ENCODE measurements at regions of chr3 and their contacts with region 1.

Region 1: DNA sequence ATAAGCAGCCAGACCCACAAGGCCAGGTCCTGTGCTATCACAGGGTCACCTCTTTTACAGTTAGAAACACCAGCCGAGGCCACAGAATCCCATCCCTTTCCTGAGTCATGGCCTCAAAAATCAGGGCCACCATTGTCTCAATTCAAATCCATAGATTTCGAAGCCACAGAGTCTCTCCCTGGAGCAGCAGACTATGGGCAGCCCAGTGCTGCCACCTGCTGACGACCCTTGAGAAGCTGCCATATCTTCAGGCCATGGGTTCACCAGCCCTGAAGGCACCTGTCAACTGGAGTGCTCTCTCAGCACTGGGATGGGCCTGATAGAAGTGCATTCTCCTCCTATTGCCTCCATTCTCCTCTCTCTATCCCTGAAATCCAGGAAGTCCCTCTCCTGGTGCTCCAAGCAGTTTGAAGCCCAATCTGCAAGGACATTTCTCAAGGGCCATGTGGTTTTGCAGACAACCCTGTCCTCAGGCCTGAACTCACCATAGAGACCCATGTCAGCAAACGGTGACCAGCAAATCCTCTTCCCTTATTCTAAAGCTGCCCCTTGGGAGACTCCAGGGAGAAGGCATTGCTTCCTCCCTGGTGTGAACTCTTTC is 39.6 kb downstream of the TGM4 start:
- DNase-seq: peak; percentile 70
- ATAC-seq: peak; percentile 58
- H3K4me3 ChIP-seq: no peak overlapping the region
- H3K4me3 Mint-ChIP-seq: no peak overlapping the region
- H3K27ac ChIP-seq: no peak overlapping the region
- H3K27ac Mint-ChIP-seq: no peak overlapping the region
- H3K4me1 ChIP-seq: no peaks in the 10 kb centered on the region
- H3K4me1 Mint-ChIP-seq: no peaks in the 10 kb centered on the region
- H3K27me3 ChIP-seq: peaks cover 0 to 16% (median 5%) of the 10 kb centered on the region in 4 experiments
- H3K27me3 Mint-ChIP-seq: peaks cover 18% of the 10 kb centered on the region
- CTCF ChIP-seq: peak; percentile 80

Region 2: GRCh38 chr3:44323341-44323955 is 590.5 kb before region 1 on chr3:
- CTCF ChIA-PET with region 1: interaction called, 27 read pairs
- POLR2A ChIA-PET with region 1: no interaction called
- intact Hi-C with region 1: no loop called
- DNase-seq: peak; percentile 57
- ATAC-seq: no peak
- H3K4me3 ChIP-seq: no peak overlapping the region
- H3K4me3 Mint-ChIP-seq: no peak overlapping the region
- H3K27ac ChIP-seq: no peak overlapping the region
- H3K27ac Mint-ChIP-seq: no peak overlapping the region
- H3K4me1 ChIP-seq: no peaks in the 10 kb centered on the region
- H3K4me1 Mint-ChIP-seq: no peaks in the 10 kb centered on the region
- H3K27me3 ChIP-seq: peaks cover 0 to 3% (median 0%) of the 10 kb centered on the region in 4 experiments
- H3K27me3 Mint-ChIP-seq: peaks cover 10% of the 10 kb centered on the region
- CTCF ChIP-seq: peak; percentile 80

Region 3: DNA sequence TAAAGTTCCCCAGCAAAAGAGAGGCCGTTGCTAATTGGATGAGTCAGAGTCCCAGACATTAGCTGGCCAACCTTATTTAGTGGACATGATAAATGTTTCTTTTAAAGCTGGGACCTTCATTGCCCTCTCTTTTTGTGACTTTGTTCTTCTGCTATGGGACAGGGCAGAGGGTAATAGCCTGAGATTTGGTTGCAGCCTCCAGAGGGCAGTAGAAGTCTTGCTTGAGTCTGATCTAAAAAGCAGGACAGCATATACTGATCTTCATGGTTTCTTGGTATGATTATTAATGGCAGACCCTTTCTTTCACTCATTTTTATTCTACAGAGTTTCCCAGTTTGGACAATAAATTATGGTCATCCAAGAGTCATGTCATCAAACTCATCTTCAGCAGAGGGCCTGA is 384.0 kb before region 1 on chr3:
- CTCF ChIA-PET with region 1: interaction called, 70 read pairs
- POLR2A ChIA-PET with region 1: no interaction called
- intact Hi-C with region 1: no loop called
- DNase-seq: no peak
- ATAC-seq: no peak
- H3K4me3 ChIP-seq: no peak overlapping the region
- H3K4me3 Mint-ChIP-seq: no peak overlapping the region
- H3K27ac ChIP-seq: no peak overlapping the region
- H3K27ac Mint-ChIP-seq: no peak overlapping the region
- H3K4me1 ChIP-seq: no peaks in the 10 kb centered on the region
- H3K4me1 Mint-ChIP-seq: no peaks in the 10 kb centered on the region
- H3K27me3 ChIP-seq: peaks cover 0 to 16% (median 2%) of the 10 kb centered on the region in 4 experiments
- H3K27me3 Mint-ChIP-seq: peaks cover 28% of the 10 kb centered on the region
- CTCF ChIP-seq: no peak

Region 4: GRCh38 chr3:44535364-44535763 is 378.6 kb before region 1 on chr3:
- CTCF ChIA-PET with region 1: interaction called, 70 read pairs
- POLR2A ChIA-PET with region 1: no interaction called
- intact Hi-C with region 1: no loop called
- DNase-seq: no peak
- ATAC-seq: no peak
- H3K4me3 ChIP-seq: no peak overlapping the region
- H3K4me3 Mint-ChIP-seq: no peak overlapping the region
- H3K27ac ChIP-seq: no peak overlapping the region
- H3K27ac Mint-ChIP-seq: no peak overlapping the region
- H3K4me1 ChIP-seq: no peaks in the 10 kb centered on the region
- H3K4me1 Mint-ChIP-seq: no peaks in the 10 kb centered on the region
- H3K27me3 ChIP-seq: peaks cover 0 to 27% (median 9%) of the 10 kb centered on the region in 4 experiments
- H3K27me3 Mint-ChIP-seq: peaks cover 50% of the 10 kb centered on the region
- CTCF ChIP-seq: no peak